Pancreas (tissue), 10 donors: ENCODE measurements at regions of chr1 and their contacts with region 1.

Region 1: GRCh38 chr1:109548321-109549267 is at the start of gene GNAI3:
- DNase-seq: peak; percentile 91 to 96 (median 94)
- ATAC-seq: peak; percentile 94 to 97 (median 95)
- H3K4me3 ChIP-seq: peak within 1 kb of the TSS; percentile 43 to 93 (median 80)
- H3K27ac ChIP-seq: peak within 1 kb of the TSS; percentile 66 to 99 (median 88)
- H3K4me1 ChIP-seq: peaks cover 0 to 41% (median 8%) of the 10 kb centered on the region in 3 donors
- H3K27me3 ChIP-seq: no peaks in the 10 kb centered on the region
- CTCF ChIP-seq: no peak
- total RNA-seq, gene GNAI3: 2.5 to 3.9 (median 3.1) TPM

Region 2: GRCh38 chr1:109630081-109630897 is 81.7 kb after region 1 on chr1:
- intact Hi-C with region 1: loop called (anchors 5 to 10 kb)
- DNase-seq: peak in 3 of 6 donors; percentile 19 to 72 (median 45)
- ATAC-seq: peak in 2 of 4 donors; percentile 37 to 44
- H3K4me3 ChIP-seq: no peak overlapping the region
- H3K27ac ChIP-seq: no peak overlapping the region
- H3K4me1 ChIP-seq: no peaks in the 10 kb centered on the region
- H3K27me3 ChIP-seq: no peaks in the 10 kb centered on the region
- CTCF ChIP-seq: peak in 1 of 4 donors; percentile 8